Aorta (tissue), 5 donors: ENCODE measurements at regions of chr9 and their contacts with region 1.

Region 1: DNA sequence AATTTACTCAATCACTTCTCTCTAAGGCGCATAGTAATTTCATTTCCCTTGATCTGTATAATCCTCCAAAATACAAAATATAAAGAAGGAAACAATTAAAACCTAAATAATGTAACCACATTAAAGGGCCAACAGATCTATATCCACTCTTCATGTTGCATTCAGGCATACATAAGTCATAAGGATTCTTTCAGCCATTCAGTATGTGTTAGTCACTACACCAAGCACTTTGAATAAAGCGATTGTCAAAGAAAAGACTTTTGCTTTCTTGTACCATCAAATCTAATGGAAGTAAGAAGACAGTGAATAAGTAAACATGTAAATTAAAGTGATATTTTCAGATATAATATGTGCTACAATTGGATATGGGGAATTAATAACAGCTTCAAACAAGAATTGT is 569.2 kb upstream of the PTPRD start:
- DNase-seq: no peak
- ATAC-seq: no peak
- H3K4me3 ChIP-seq: no peak overlapping the region
- H3K27ac ChIP-seq: no peak overlapping the region
- H3K4me1 ChIP-seq: no peaks in the 10 kb centered on the region
- H3K27me3 ChIP-seq: no peaks in the 10 kb centered on the region

Region 2: GRCh38 chr9:11233696-11234095 is 51.7 kb after region 1 on chr9:
- intact Hi-C with region 1: loop called in 1 of 2 experiments (anchors 10 kb)
- DNase-seq: no peak
- ATAC-seq: no peak
- H3K4me3 ChIP-seq: no peak overlapping the region
- H3K27ac ChIP-seq: no peak overlapping the region
- H3K4me1 ChIP-seq: no peaks in the 10 kb centered on the region
- H3K27me3 ChIP-seq: no peaks in the 10 kb centered on the region